ENCODE measurements at regions of chr19 and their contacts with region 1.

Region 1: DNA sequence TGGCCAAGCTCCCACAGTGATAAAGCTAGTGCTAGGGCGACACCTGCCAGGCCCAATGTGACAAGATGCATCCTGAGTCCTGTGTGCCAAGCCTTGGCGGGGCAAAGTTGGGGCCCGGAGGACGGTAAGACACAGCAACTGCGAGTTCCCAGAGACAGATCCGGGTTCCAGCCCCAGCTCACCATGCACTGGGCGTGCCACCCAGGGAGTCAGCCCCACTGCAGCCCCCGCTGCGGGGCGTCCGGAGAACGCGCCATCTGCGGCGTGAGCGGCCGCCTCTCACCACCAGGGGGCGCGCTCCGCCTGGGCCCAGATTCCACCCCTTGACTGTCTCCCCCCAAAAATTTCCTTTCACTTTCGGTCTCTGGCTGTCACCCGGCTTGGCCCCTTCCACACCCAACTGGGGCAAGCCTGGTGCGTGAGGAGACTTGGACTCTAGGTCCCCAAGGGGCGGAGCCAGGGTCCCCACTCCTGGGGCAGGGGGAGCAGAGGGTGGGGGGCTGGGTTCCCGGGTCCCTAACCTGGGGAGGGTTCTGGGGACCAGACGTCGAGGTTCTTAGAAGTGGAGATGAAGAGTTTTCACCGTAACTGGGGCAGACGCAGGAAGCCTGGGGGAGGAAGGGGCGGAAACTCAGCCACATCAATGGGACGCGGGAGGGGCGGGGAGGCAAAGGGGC is at the start of gene FLT3LG:
- DNase-seq: peak; percentile 94
- ATAC-seq: peak; percentile 47
- H3K4me3 Mint-ChIP-seq: peak within 1 kb of the TSS; percentile 73
- H3K27ac Mint-ChIP-seq: peak within 1 kb of the TSS; percentile 84
- H3K4me1 Mint-ChIP-seq: peaks cover 58% of the 10 kb centered on the region
- H3K27me3 Mint-ChIP-seq: no peaks in the 10 kb centered on the region
- total RNA-seq, gene FLT3LG: 38.6 to 43.2 TPM

Region 2: DNA sequence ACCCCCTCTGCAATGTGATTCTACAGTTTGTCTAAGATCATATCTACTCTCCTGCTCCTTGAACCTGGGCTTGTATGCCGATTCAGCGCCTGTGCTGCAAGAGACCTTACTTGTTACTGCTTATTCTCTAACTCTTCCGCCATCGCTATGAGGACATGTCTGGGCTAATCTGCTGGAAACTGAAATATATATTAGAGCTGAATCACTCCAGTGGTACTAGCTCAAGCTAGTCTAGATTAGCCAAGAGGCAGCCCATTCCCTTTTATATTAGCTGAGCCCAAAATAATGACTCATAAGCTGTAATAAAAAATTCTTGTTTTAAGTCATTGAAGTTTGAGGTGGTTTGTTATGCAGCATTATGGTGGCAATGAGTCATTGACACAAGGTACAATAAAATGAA is 201.8 kb before region 1 on chr19:
- CTCF ChIA-PET with region 1: no interaction called
- POLR2A ChIA-PET with region 1: no interaction called
- intact Hi-C with region 1: loop called in 1 of 2 experiments (anchors 2 kb)
- DNase-seq: no peak
- ATAC-seq: peak; percentile 75
- H3K4me3 Mint-ChIP-seq: no peak overlapping the region
- H3K27ac Mint-ChIP-seq: no peak overlapping the region
- H3K4me1 Mint-ChIP-seq: peaks cover 3% of the 10 kb centered on the region
- H3K27me3 Mint-ChIP-seq: peaks cover 10% of the 10 kb centered on the region

Region 3: GRCh38 chr19:49391581-49392399 is 82.2 kb before region 1 on chr19:
- CTCF ChIA-PET with region 1: interaction called, 11 read pairs
- POLR2A ChIA-PET with region 1: interaction called, 3 read pairs
- intact Hi-C with region 1: loop called (anchors 1 kb)
- DNase-seq: peak; percentile 90
- ATAC-seq: peak; percentile 83
- H3K4me3 Mint-ChIP-seq: no peak overlapping the region
- H3K27ac Mint-ChIP-seq: no peak overlapping the region
- H3K4me1 Mint-ChIP-seq: peaks cover 16% of the 10 kb centered on the region
- H3K27me3 Mint-ChIP-seq: no peaks in the 10 kb centered on the region

Region 4: DNA sequence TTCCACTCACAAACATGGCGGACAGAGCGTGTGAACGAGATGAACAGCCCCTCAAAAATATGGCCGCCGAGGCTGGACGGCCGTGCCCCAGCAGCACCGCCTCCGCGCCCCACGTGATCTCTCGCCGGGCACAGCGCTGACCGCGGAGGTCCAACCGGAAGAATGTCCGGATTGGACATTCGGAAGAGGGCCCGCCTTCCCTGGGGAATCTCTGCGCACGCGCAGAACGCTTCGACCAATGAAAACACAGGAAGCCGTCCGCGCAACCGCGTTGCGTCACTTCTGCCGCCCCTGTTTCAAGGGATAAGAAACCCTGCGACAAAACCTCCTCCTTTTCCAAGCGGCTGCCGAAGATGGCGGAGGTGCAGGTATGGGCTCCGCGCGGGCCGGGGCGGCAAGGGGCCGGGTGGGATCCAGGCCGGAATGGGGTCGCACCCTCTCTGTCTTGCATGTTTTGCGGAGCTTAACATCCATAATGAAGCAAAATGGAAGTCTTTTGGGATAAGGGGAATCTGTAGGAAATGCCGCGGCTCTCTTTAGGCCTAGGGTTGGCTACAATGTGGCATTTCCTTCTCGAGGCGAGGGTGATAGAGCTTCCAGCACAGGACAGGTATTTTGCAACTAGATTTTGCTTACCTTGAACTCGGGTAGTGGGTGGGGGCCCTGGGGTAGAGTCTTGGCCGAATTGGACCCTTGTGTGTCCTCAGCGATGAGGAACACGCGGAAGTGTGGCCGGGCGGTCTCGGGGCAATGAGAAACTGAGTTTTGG is 13.5 kb after region 1 on chr19 and contains the start of gene RPL13A:
- CTCF ChIA-PET with region 1: interaction called, 15 read pairs
- POLR2A ChIA-PET with region 1: interaction called, 6 read pairs
- intact Hi-C with region 1: loop called (anchors 1 kb)
- DNase-seq: peak; percentile 100
- ATAC-seq: peak; percentile 90
- H3K4me3 Mint-ChIP-seq: peak within 1 kb of the TSS; percentile 99
- H3K27ac Mint-ChIP-seq: peak within 1 kb of the TSS; percentile 97
- H3K4me1 Mint-ChIP-seq: peaks cover 26% of the 10 kb centered on the region
- H3K27me3 Mint-ChIP-seq: no peaks in the 10 kb centered on the region
- total RNA-seq, gene RPL13A: 3,861 to 3,967 TPM